ENCODE measurements at regions of chr9 and their contacts with region 1.

Region 1: DNA sequence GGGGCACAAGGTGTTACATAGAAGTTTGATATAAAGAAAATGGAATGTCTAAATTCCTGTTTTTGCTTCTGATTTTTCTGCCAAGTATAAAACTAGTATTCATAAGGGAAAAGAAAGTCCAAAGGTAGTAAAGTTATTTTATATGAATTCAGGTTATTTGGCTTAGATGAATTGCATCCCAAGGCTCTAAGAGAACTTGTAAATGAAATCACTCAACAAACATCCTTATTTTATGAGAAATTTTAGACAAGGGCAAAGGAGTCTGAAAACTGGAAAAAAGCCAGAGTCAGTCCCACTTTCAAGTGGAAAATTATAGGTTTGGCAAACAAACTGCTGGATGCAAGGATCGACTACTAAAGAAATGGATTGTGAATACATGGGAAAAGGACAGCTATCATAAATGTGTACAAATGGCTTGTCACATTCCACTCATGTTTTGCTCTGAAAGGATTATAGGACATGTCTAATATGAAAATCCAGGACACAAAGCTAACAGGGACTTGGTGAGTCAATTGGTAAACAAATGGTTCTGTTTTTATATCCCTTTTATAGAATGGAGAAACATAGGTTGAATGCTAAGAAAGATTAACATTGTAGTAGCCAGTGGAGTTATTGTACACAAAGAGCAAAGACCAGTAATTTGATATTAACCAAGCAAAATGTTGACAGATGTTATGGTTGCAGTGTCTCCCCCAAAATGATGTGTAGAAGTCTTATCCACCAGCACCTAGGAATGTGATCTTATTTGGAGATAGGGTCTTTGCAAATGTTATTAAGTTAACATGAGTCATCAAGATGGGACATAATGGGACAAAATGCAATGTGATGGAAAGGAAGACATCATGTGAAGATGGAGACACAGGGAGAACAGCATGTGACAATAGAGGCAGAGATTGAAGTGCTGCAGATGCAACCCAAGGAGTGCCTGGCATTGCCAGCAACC is 495.7 kb downstream of the TLE1 start:
- DNase-seq: peak; percentile 79
- ATAC-seq: peak; percentile 88
- H3K4me3 ChIP-seq: no peak overlapping the region
- H3K27ac ChIP-seq: peak overlapping the region; percentile 84
- H3K4me1 ChIP-seq: peaks cover 25% of the 10 kb centered on the region
- H3K27me3 ChIP-seq: no peaks in the 10 kb centered on the region
- CTCF ChIP-seq: no peak

Region 2: DNA sequence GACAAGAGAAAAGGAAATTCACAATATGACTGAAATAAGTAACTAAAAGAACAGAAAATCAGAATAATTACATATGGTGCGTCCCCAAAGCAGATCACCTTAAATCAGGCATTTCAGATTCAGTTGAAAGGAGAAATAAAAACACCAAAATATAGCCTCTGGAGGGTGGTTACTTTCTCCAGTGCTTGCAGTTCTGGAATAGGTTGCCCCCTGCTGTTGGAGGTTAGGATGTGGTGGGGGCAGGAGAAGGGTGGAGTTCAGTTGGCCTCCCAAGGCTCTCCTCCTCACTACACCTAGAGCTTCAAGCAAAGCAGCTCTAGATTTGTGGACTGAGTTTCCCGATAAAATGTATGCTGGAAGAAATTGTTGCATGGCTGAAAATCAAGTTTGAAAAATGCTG is 1960.1 kb before region 1 on chr9:
- CTCF ChIA-PET with region 1: no interaction called
- POLR2A ChIA-PET with region 1: no interaction called
- intact Hi-C with region 1: no loop called
- DNase-seq: peak; percentile 50
- ATAC-seq: no peak
- H3K4me3 ChIP-seq: no peak overlapping the region
- H3K27ac ChIP-seq: no peak overlapping the region
- H3K4me1 ChIP-seq: no peaks in the 10 kb centered on the region
- H3K27me3 ChIP-seq: no peaks in the 10 kb centered on the region
- CTCF ChIP-seq: peak; percentile 60

Region 3: GRCh38 chr9:81116340-81117137 is 77.1 kb before region 1 on chr9:
- CTCF ChIA-PET with region 1: no interaction called
- POLR2A ChIA-PET with region 1: no interaction called
- intact Hi-C with region 1: loop called (anchors 2 kb)
- DNase-seq: peak; percentile 8
- ATAC-seq: peak; percentile 97
- H3K4me3 ChIP-seq: no peak overlapping the region
- H3K27ac ChIP-seq: peak overlapping the region; percentile 25; the same call in 1 of the 2 replicates
- H3K4me1 ChIP-seq: 0 out of 2 replicates have a peak, but pooled peaks cover 9% of the 10 kb centered on the region
- H3K27me3 ChIP-seq: no peaks in the 10 kb centered on the region
- CTCF ChIP-seq: no peak

Region 4: DNA sequence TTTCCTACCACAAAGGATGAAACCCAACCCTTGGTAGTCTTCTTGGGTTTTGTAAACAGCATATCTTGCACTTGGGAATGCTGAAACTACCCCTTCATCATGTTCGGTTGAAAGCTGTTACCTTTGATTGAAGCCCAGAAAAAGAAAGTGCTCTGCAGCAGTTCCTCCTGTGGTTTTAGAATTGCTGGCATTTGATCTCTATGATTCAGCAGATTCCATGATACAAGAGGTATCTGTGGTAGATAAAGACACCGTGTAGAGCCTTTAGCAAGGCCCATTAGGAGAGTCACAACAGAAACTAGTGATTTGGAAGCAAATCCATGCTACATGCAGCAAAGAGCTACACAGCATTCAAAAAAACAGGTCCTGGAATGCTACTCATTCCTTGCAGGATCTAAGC is 61.3 kb before region 1 on chr9:
- CTCF ChIA-PET with region 1: no interaction called
- POLR2A ChIA-PET with region 1: no interaction called
- intact Hi-C with region 1: no loop called
- DNase-seq: peak; percentile 38
- ATAC-seq: no peak
- H3K4me3 ChIP-seq: no peak overlapping the region
- H3K27ac ChIP-seq: no peak overlapping the region
- H3K4me1 ChIP-seq: peaks cover 7% of the 10 kb centered on the region; the same call in 1 of the 2 replicates
- H3K27me3 ChIP-seq: no peaks in the 10 kb centered on the region
- CTCF ChIP-seq: no peak

Region 5: DNA sequence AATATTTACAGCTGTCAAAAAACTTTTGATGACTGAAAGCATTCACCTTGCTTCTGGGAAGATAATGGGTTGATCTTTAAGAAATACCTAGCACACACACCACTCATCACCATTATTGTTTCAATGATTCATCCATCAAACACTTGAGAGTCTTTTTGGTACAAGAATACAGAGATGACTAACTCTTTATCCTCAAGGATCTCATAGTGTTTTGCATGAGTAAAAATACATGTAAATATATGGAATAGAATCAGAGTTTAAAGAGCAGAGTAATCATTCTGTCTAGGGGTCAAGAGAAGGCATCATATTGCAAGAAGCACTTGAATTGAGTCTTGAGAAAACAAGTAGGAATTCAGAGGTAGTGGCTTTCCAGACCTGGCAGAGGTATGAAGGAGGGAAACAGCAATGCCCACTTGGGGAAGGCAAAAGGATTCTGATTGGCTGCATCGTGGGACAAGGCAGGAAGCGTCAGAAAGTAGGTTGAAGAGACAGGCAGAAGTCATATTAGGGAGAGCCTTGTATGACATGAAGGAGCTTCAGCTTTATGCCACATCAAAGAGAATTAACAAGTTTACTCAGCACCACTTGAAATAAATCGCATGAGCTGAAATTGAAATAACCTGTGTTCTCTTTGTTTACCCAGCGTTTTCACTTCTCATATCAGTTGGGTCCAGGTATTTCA is 46.8 kb before region 1 on chr9:
- CTCF ChIA-PET with region 1: no interaction called
- POLR2A ChIA-PET with region 1: no interaction called
- intact Hi-C with region 1: loop called (anchors 1 kb)
- DNase-seq: peak; percentile 85
- ATAC-seq: peak; percentile 88
- H3K4me3 ChIP-seq: 0 out of 2 replicates have a peak overlapping the region, but pooled peaks have one; percentile 12
- H3K27ac ChIP-seq: peak overlapping the region; percentile 82
- H3K4me1 ChIP-seq: peaks cover 40% of the 10 kb centered on the region
- H3K27me3 ChIP-seq: no peaks in the 10 kb centered on the region
- CTCF ChIP-seq: no peak

Region 6: DNA sequence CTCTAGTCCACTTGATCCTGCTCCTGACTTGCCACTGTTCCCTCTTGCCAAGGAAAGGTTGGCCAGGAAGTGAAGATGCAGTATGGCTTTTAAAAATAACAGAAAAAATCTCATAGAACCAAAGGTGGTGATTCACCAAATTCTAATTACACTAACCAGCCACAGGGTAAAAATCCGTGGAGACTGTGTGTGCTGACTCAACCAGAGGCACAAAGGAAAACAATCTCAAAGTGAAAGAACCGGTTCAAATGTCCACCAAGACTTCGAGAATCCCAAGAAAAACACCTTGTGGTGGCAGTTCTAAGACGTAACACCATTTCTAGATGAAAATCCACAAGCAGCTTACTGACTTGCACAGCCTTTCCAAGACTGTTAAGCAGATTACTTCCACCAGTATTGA is 216.6 kb after region 1 on chr9:
- CTCF ChIA-PET with region 1: no interaction called
- POLR2A ChIA-PET with region 1: no interaction called
- intact Hi-C with region 1: loop called (anchors 1 kb)
- DNase-seq: peak; percentile 90
- ATAC-seq: peak; percentile 67
- H3K4me3 ChIP-seq: peak overlapping the region; percentile 26; the same call in 1 of the 2 replicates
- H3K27ac ChIP-seq: peak overlapping the region; percentile 82
- H3K4me1 ChIP-seq: peaks cover 52% of the 10 kb centered on the region
- H3K27me3 ChIP-seq: no peaks in the 10 kb centered on the region
- CTCF ChIP-seq: no peak